OCI-LY7 (cell line): ENCODE measurements at regions of chr7 and their contacts with region 1.

Region 1: DNA sequence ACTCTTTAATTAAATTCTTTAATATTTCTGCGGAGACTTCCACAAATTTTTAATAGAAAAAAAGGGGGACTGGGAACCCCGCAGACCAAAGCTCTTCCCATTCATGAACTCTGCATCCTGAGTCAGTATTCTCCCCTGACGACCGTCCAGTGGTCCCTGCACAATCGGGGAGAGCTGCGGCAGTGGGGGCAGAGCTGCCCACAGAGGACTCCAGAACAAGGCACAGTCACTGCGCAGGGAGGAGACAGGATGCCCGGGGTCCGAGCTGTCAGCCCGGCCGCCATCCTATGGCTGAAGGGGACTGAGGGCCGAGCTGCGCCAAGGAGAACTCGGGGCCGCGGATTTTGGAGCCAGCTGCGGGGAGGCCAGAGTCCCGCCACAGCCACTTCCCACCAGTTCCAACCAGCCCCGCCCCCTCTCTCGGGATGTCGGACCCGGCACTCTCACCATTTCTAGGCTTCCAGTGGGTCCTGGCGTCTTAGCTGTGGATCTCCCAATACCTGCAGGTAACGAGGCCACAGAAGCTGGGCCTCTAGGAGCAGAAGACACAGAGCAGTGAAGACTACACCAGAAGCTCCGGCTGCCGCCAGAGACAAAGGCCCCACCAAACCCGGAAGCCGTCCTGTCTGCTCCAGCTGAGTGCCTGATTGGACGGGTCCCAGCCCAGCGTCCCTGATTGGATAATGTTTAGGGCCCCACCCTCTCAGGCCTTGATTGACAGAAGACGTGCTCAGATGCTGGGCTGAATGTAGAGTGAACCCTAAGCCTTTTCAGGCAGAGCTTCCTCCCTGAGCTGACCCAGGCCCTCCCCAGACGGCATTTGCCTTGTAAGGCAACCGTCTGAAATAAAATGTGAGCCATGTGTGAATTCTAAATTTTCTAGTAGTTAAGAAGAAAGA is at the start of gene ERV3-1:
- DNase-seq: peak; percentile 98
- H3K4me3 ChIP-seq: peak within 1 kb of the TSS; percentile 94
- H3K27ac ChIP-seq: peak within 1 kb of the TSS; percentile 72
- H3K4me1 ChIP-seq: peaks cover 28% of the 10 kb centered on the region
- CTCF ChIP-seq: no peak
- total RNA-seq, gene ERV3-1: 24.6 and 34.4 TPM in 2 replicates

Region 2: DNA sequence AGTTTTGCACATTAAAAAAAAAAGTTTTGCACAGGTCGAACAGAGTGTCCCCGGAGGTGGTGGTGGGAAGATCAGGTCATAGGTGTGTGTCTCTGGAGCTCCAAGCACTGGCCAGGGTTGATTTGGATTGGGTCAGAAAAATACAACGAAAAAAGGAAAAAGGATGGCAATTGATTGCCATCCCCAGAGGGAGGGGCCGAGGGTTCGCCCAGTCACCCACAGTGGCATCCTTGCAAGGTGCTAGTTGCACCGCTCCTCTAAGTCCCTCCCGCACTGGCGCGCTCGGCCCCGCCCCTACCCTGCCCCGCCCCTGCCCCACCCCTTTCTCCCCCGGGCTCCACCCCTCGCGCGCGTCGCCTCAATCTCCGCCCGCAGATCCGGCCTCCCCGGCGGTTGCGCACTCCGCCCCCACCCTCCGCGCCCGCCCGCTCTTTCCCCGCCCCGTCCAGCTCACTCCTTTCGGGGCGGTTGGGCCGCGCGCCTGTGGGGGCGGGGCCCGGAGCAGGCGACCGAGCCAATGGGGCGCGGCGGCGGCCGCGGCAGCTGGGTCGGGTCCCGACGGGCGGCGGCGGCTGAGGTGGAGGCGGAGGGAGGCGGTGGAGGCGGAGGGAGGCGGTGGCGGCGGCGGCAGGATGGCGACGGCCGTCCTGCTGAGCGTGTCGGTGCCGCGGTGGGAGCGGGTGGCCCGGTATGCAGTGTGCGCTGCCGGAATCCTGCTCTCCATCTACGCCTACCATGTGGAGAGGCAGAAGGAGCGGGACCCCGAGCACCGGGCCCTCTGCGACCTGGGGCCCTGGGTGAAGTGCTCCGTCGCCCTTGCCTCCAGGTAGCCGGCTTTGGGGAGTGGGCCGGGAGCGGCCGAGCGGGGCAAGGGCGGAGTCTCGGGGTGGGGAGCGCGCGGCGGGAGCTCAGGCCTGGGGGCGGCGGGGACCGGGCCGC is 31.7 kb after region 1 on chr7:
- CTCF ChIA-PET with region 1: no interaction called
- POLR2A ChIA-PET with region 1: interaction called, 22 read pairs
- intact Hi-C with region 1: no loop called
- DNase-seq: peak; percentile 94
- H3K4me3 ChIP-seq: peak overlapping the region; percentile 86
- H3K27ac ChIP-seq: peak overlapping the region; percentile 54
- H3K4me1 ChIP-seq: peaks cover 26% of the 10 kb centered on the region
- CTCF ChIP-seq: peak; percentile 59